Posterior vena cava (tissue), 2 donors: ENCODE measurements at regions of chr2 and their contacts with region 1.

Region 1: GRCh38 chr2:31688282-31688681 is 107.5 kb upstream of the SRD5A2 start:
- DNase-seq: no peak

Region 2: GRCh38 chr2:30040147-30040546 is 1648.1 kb before region 1 on chr2:
- intact Hi-C with region 1: loop called in 1 of 2 experiments (anchors 5 kb)
- DNase-seq: no peak

Region 3: DNA sequence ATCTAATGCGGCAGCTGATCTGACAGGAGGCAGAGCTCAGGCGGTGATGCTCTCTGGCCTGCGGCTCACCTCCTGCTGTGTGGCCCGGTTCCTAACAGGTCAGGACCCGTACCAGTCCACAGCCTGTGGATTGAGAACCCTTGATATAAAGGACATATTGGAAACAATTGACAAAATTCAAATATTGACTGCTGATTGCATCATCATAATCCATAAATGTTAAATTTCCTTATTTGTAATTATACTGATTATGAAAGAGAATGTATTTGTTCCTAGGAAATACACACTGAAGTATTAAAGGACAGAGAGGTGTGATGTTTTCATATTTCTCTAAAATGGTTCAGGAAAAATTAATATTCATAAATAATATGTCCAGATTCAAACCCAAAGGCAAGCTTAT is 43.7 kb before region 1 on chr2:
- intact Hi-C with region 1: no loop called
- DNase-seq: no peak

Region 4: DNA sequence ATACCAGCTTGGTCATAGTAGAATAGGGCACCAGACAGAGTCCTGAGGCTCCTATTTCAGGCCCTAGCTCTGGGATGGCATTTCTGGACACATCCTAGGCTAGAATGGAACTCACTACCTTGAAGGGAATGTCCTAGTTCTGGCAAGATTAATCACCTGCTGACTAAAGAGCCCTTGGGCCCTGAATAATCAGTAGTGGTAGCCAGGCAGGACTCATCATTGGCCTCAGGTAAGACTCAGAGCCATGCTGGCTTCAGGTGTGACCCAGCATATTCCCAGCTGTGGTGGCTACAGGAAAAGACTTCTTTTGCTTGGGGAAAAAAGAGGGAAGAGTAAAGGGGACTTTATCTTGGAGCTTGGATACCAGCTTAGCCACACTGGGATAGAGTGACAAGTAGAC is 23.5 kb after region 1 on chr2:
- intact Hi-C with region 1: loop called in 1 of 2 experiments (anchors 2 kb)
- DNase-seq: no peak

Region 5: DNA sequence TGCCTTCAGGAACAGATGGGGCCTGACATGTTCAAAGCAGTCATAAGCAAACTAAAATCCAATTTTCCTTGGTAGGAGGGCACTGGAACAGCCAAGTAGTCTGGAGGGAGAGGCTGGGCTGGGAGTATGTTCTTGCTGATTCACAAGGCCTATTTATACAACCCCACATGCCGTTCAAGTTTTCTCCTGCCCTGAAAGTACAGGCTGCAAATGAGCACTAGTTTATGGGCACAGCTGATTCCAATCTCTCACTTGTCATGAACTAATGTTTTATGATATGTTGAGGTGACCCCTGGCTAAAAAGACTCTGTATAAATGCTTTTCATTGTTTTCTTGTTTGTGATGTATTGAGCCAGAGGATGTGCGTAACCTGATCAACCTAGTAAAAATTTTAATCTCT is 75.9 kb after region 1 on chr2:
- intact Hi-C with region 1: no loop called
- DNase-seq: no peak

Region 6: GRCh38 chr2:32118055-32118454 is 429.8 kb after region 1 on chr2:
- intact Hi-C with region 1: no loop called
- DNase-seq: no peak

Region 7: DNA sequence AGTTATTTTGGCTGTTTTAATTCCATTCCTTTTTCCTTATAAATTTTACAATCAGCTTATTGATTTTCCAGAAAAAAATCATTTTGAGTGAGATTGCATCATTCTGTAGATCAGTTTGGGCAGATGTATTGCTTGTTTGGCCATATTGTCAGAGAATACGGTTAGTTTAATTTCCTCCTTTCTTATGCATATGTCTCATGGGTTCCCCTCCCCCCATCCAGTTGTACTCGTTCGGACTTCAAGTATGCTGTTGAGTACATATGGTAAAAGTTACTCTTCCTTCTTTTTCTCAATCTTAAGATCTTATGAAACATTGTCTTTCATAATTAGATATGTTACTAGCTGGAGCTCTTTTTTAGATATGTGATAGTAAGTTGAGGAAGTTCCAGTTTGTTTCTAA is 808.4 kb after region 1 on chr2:
- intact Hi-C with region 1: no loop called
- DNase-seq: no peak